BJ (cell line): ENCODE measurements at regions of chr11 and their contacts with region 1.

Region 1: DNA sequence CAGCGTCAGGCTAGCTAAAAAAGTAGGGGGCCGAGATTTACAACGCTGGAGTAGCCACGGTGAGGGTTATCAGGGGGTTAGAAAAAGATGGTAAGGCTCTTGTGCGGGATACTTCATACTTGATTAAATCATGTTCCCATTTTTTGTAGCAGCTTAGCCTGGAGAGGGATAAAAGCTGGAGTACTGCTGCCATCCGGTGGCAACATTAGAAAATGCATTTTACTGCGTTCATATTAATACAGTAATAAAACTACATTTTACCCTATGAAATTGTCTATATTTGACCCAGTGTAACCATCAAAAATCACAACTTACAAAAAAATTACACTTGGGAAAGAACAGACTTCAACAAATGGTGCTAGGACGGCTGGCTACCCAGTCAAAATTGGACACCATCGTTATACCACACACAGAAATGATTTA is 17.3 kb downstream of the RPUSD4 start:
- DNase-seq: no peak
- H3K4me3 ChIP-seq: no peak overlapping the region
- H3K27me3 ChIP-seq: no peaks in the 10 kb centered on the region
- CTCF ChIP-seq: peak; percentile 59

Region 2: DNA sequence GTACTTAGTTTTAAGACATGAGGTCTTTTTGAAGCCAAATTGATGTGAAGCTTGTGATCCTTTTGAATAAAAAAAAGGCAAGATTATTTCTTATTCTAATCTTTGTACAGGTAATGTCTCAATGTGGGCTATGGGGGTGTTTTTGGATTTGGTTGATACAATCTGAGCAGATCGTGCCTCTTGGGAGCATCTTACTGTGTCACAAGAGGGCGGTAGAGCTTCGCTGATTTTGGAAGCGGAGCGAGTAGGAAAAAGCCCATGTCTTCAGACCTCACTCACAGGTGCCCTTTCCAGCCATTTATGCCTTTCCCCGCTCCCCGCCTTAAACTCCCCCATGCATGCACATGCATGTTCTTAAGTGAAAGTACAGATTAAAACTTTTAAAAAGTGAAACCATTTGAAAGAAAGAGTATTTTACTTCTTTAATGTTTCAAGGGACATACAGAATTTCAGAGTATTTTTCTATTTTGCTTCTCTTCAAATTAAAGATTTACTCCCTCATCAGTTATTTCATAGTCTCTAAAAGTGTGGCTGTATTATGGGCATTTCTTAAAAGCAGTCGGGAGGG is 271.0 kb before region 1 on chr11:
- CTCF ChIA-PET with region 1: interaction called, 67 read pairs
- POLR2A ChIA-PET with region 1: no interaction called
- DNase-seq: peak; percentile 9
- H3K4me3 ChIP-seq: no peak overlapping the region
- H3K27me3 ChIP-seq: peaks cover 10% of the 10 kb centered on the region
- CTCF ChIP-seq: peak; percentile 89

Region 3: GRCh38 chr11:125941619-125942611 is 252.2 kb before region 1 on chr11:
- CTCF ChIA-PET with region 1: interaction called, 40 read pairs
- POLR2A ChIA-PET with region 1: no interaction called
- DNase-seq: no peak
- H3K4me3 ChIP-seq: no peak overlapping the region
- H3K27me3 ChIP-seq: peaks cover 1% of the 10 kb centered on the region
- CTCF ChIP-seq: peak; percentile 78

Region 4: DNA sequence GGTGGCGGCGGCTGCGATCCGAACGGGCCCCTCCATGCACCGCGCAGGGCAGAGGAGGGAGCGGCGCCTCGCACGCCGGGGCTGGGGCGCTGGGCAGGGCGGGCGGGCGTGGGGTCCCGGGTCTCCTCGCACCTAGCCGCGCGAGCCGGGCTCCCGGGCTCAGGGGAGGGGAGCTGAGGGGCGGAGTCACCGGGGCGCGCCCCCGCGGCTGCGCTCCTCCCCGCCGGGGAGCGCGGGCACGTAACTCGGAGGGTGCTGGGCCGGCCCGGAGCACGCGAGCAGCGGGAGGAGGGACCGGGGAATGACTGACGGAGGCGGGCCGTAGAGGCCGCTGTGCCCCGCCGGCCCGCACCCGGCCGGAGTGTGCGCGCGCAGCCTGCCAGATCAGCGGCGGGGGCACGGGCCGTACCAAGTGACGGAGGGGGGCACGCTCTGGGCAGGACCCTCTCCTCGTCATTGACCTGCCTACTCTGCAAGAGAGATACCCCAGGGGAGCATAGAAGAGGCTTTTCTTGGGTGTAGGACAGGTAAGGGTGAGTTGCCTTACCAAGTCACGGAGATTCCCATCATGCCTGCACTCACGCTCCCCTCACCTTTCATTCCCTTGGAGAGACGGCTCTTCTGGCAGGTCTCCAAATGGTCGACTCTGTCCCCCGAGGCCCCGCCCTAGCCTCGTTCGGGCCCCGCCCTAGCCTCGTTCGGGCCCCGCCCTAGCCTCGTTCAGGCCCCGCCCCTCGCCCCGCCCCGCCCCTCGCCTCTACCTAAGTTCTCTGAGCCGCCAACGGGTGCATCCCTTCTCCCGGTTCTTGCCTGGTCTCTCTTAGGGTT is 131.2 kb before region 1 on chr11 and contains the start of gene CDON:
- CTCF ChIA-PET with region 1: interaction called, 10 read pairs
- POLR2A ChIA-PET with region 1: no interaction called
- DNase-seq: peak; percentile 27
- H3K4me3 ChIP-seq: peak within 1 kb of the TSS; percentile 72
- H3K27me3 ChIP-seq: peaks cover 14% of the 10 kb centered on the region
- CTCF ChIP-seq: no peak
- polyA plus RNA-seq, gene CDON: 1.5 TPM in 2 replicates

Region 5: DNA sequence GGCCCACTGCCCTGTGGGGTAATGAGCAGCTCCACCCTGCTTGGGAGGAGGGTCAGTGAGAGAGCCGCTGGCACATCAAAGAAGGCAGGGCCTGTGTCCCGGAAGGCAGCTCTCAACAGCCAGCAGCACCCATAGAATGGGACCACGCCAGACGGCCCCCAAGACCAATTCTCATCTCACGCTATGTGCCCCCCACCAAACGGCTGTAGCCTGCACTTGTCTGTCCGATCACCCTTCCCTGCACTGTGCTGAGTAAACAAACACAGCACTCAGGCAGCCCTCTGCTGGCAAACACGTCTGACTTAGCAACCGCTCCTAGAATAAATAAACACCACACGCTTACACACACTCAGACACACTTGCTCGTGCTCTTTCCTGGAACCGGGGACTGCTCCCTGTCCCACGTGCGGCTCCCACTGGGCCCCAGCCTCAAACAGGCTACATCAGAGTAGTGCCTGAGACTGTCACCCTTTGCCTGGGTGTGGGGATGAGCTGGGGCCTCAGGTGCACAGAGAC is 78.3 kb before region 1 on chr11:
- CTCF ChIA-PET with region 1: interaction called, 10 read pairs
- POLR2A ChIA-PET with region 1: no interaction called
- DNase-seq: peak; percentile 71
- H3K4me3 ChIP-seq: no peak overlapping the region
- H3K27me3 ChIP-seq: no peaks in the 10 kb centered on the region
- CTCF ChIP-seq: peak; percentile 46